Psoas muscle (tissue), 8 donors: ENCODE measurements at regions of chr2 and their contacts with region 1.

Region 1: DNA sequence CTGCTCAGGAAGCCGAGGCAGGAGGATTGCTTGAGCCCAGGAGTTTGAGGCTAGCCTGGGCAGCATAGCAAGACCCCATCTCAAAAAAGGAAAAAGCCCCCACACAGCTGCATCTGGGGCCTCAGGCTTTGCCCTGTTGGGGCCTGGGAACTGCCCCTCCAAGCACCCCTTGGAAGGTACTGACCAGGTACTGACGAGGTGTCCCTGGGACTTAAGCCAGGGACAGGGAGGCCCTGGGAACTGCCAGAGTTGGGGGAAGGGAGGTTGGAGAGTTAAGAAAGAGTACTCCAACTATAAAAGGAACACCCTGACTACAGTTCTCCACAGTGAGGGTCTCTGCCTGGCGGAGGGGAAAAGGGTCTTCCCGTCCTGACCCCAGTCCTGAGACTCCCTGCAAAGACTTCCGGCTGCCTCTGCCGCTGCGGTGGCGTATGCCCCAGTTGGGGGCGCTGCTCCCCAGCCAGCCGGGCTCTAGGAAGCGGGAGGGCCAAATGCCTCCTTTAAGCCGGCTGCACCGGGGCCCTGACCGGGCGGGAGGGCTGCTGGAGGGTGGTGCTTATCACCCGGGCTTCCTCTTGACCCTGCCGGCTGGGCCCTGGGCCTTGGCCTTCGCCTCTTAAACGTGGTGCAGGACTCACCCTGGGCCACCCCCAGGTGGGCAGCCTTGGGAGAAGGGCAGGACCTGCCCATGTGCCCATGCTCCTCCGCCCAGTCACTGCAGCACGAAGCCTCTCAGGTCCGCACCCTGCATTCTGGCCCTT is 12.8 kb downstream of the SLC30A3 start:
- DNase-seq: peak; percentile 57 to 81
- ATAC-seq: peak; percentile 86 to 92 (median 89)
- H3K4me3 ChIP-seq: no peak overlapping the region
- H3K27ac ChIP-seq: no peak overlapping the region
- H3K4me1 ChIP-seq: peaks cover 7% of the 10 kb centered on the region
- H3K27me3 ChIP-seq: no peaks in the 10 kb centered on the region
- CTCF ChIP-seq: peak; percentile 77

Region 2: GRCh38 chr2:26363323-26363722 is 886.7 kb before region 1 on chr2:
- intact Hi-C with region 1: no loop called
- DNase-seq: no peak
- ATAC-seq: no peak
- H3K4me3 ChIP-seq: no peak overlapping the region
- H3K27ac ChIP-seq: no peak overlapping the region
- H3K4me1 ChIP-seq: peaks cover 15% of the 10 kb centered on the region
- H3K27me3 ChIP-seq: no peaks in the 10 kb centered on the region
- CTCF ChIP-seq: no peak

Region 3: GRCh38 chr2:26778501-26778900 is 471.6 kb before region 1 on chr2:
- intact Hi-C with region 1: no loop called
- DNase-seq: no peak
- ATAC-seq: no peak
- H3K4me3 ChIP-seq: no peak overlapping the region
- H3K27ac ChIP-seq: no peak overlapping the region
- H3K4me1 ChIP-seq: peaks cover 2% of the 10 kb centered on the region
- H3K27me3 ChIP-seq: no peaks in the 10 kb centered on the region
- CTCF ChIP-seq: no peak

Region 4: GRCh38 chr2:27275211-27276150 is 25.4 kb after region 1 on chr2 and contains the start of gene DNAJC5G:
- intact Hi-C with region 1: loop called (anchors 2 kb)
- DNase-seq: no peak
- ATAC-seq: no peak
- H3K4me3 ChIP-seq: no peak within 1 kb of the TSS
- H3K27ac ChIP-seq: no peak within 1 kb of the TSS
- H3K4me1 ChIP-seq: peaks cover 5% of the 10 kb centered on the region
- H3K27me3 ChIP-seq: peaks cover 0 to 2% (median 0%) of the 10 kb centered on the region in 3 donors
- CTCF ChIP-seq: no peak
- total RNA-seq, gene DNAJC5G: not detected

Region 5: GRCh38 chr2:27303093-27304025 is 53.3 kb after region 1 on chr2:
- intact Hi-C with region 1: loop called in 1 of 2 experiments (anchors 2 kb)
- DNase-seq: peak in 1 of 2 donors; percentile 62
- ATAC-seq: peak; percentile 28 to 67 (median 51)
- H3K4me3 ChIP-seq: peak overlapping the region; percentile 49
- H3K27ac ChIP-seq: peak overlapping the region; percentile 65
- H3K4me1 ChIP-seq: peaks cover 23% of the 10 kb centered on the region
- H3K27me3 ChIP-seq: no peaks in the 10 kb centered on the region
- CTCF ChIP-seq: peak; percentile 79